ENCODE measurements at regions of chr3 and their contacts with region 1.

Region 1: DNA sequence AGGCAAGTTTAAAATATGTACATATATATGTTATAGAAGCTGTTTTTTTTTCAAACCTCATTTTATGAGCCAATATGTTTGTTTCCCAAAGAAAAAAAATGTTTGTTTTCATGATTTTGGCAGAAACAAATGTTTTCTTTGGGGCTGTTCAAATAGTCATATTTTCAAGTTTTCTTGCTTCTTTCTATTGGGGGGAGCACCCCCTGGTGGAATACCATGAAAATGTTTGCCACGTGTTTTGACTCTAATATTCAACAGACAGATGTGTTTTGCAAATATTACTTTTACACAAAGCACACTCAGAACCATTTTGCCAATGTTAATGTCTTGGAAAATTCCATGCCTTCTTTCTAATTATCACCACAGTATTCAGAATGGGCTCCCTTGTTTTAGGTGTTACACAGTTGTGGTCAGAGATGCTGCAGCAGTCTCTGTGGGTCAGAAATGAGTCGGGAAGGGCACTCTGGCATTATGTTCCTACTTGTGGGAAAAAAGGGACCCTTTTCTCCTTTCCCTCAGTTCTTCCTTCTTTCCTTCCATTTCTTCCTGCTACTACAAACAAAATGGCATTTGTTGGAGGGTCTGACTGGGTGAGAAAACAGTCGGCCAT is 817.0 kb downstream of the TUSC7 start:
- DNase-seq: peak; percentile 40
- H3K4me3 Mint-ChIP-seq: no peak overlapping the region
- H3K27ac Mint-ChIP-seq: no peak overlapping the region
- H3K4me1 Mint-ChIP-seq: peaks cover 26% of the 10 kb centered on the region
- H3K27me3 Mint-ChIP-seq: peaks cover 2% of the 10 kb centered on the region
- CTCF ChIP-seq: peak; percentile 58

Region 2: GRCh38 chr3:116770815-116771450 is 755.6 kb before region 1 on chr3:
- CTCF ChIA-PET with region 1: interaction called, 3 read pairs
- POLR2A ChIA-PET with region 1: no interaction called
- intact Hi-C with region 1: loop called (anchors 5 kb)
- DNase-seq: peak; percentile 77
- H3K4me3 Mint-ChIP-seq: no peak overlapping the region
- H3K27ac Mint-ChIP-seq: no peak overlapping the region
- H3K4me1 Mint-ChIP-seq: no peaks in the 10 kb centered on the region
- H3K27me3 Mint-ChIP-seq: peaks cover 90% of the 10 kb centered on the region
- CTCF ChIP-seq: peak; percentile 87

Region 3: DNA sequence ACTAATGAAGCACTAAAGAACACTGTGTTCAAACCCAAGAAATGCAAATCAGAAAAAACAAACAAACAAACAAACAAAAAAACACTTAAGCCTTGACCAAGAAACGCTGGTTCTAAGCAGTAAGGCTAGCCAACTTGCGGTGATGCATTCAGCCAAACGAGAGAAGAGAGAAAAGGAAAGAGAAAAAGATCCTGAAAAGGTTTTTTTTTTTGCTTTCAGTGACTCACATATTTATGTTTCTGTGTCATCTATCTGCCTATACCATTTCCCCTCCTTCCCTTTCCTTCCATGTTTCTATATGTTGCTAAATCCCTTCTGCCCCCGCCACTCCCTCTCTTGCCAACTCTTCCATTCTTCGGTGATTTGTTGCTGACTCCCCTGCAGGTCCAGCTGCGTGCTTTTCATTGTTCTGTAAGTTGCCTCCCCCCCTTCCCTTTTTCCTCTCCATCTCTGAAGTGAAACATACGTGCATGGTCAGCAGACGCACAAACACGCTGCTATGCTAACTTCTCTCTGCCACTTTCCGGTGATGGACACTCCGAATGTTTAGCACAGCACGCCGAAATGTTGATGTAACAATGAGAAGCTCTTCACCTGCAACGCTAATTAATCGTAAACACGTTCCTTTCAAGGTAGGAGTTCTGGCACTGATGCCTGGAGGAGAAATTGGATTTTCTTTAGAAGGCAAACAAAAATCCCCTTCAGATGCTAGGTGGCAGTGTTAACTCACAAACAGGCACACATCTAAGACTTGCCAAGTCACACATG is 662.6 kb before region 1 on chr3:
- CTCF ChIA-PET with region 1: interaction called, 5 read pairs
- POLR2A ChIA-PET with region 1: no interaction called
- intact Hi-C with region 1: loop called (anchors 1 kb)
- DNase-seq: peak; percentile 51
- H3K4me3 Mint-ChIP-seq: no peak overlapping the region
- H3K27ac Mint-ChIP-seq: no peak overlapping the region
- H3K4me1 Mint-ChIP-seq: no peaks in the 10 kb centered on the region
- H3K27me3 Mint-ChIP-seq: no peaks in the 10 kb centered on the region
- CTCF ChIP-seq: peak; percentile 46

Region 4: GRCh38 chr3:117019082-117019713 is 507.4 kb before region 1 on chr3:
- CTCF ChIA-PET with region 1: interaction called, 9 read pairs
- POLR2A ChIA-PET with region 1: no interaction called
- intact Hi-C with region 1: loop called (anchors 1 kb)
- DNase-seq: peak; percentile 60
- H3K4me3 Mint-ChIP-seq: no peak overlapping the region
- H3K27ac Mint-ChIP-seq: no peak overlapping the region
- H3K4me1 Mint-ChIP-seq: no peaks in the 10 kb centered on the region
- H3K27me3 Mint-ChIP-seq: peaks cover 83% of the 10 kb centered on the region
- CTCF ChIP-seq: peak; percentile 74

Region 5: GRCh38 chr3:117059067-117059955 is 467.3 kb before region 1 on chr3:
- CTCF ChIA-PET with region 1: interaction called, 28 read pairs
- POLR2A ChIA-PET with region 1: no interaction called
- intact Hi-C with region 1: loop called (anchors 1 kb)
- DNase-seq: peak; percentile 19
- H3K4me3 Mint-ChIP-seq: no peak overlapping the region
- H3K27ac Mint-ChIP-seq: no peak overlapping the region
- H3K4me1 Mint-ChIP-seq: no peaks in the 10 kb centered on the region
- H3K27me3 Mint-ChIP-seq: peaks cover 44% of the 10 kb centered on the region
- CTCF ChIP-seq: peak; percentile 44

Region 6: DNA sequence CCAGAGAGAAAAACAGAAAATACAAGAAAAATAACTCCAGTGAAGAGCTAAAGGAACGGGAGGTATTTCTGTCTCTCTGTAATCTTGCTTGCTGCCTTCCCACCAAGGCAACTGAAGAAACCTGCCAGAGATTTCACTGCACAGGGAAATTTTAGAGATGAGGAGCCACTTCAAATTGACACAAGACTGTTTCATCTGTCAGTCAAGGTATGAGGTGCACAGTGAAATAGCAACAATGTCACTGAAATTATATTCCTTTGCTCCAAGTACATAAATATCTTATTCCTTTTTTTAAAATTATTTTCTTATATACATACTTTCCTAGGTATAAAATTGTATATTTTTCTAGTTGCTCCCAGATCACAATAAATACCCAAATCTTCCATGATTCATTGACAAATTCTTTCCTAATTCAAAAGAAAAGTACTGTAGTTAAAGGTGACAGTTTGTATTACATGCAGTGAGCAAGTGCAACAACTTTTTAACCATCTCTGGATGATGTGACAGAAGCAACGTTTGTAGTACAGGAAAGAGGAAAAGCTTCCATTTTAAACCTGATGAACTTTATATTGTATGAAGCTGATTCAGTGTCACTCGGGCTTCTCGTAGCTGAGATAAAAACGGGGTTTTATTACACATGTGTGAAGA is 253.6 kb before region 1 on chr3:
- CTCF ChIA-PET with region 1: no interaction called
- POLR2A ChIA-PET with region 1: no interaction called
- intact Hi-C with region 1: loop called (anchors 5 kb)
- DNase-seq: no peak
- H3K4me3 Mint-ChIP-seq: no peak overlapping the region
- H3K27ac Mint-ChIP-seq: no peak overlapping the region
- H3K4me1 Mint-ChIP-seq: no peaks in the 10 kb centered on the region
- H3K27me3 Mint-ChIP-seq: peaks cover 91% of the 10 kb centered on the region
- CTCF ChIP-seq: no peak

Region 7: DNA sequence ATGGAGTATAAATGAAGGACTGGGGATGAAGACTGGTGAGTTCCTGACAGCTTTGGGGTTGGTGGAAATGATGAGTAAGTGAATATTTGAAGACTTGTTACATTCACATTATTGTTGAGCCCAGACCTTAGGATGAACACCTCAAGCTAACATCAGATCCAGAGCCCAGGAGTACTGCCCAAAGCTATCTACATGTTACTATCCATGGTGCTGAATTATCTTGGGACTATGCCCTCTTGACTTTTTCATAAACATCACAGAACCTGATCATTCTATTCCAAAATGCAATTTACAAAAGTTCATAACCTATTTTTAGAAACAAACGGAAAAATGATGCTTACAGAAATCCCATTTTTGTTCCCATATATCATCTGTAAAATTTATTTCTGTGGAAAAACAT is 203.7 kb before region 1 on chr3:
- CTCF ChIA-PET with region 1: no interaction called
- POLR2A ChIA-PET with region 1: no interaction called
- intact Hi-C with region 1: no loop called
- DNase-seq: peak; percentile 33
- H3K4me3 Mint-ChIP-seq: no peak overlapping the region
- H3K27ac Mint-ChIP-seq: no peak overlapping the region
- H3K4me1 Mint-ChIP-seq: no peaks in the 10 kb centered on the region
- H3K27me3 Mint-ChIP-seq: peaks cover 49% of the 10 kb centered on the region
- CTCF ChIP-seq: no peak

Region 8: GRCh38 chr3:117407317-117407716 is 119.3 kb before region 1 on chr3:
- CTCF ChIA-PET with region 1: interaction called, 15 read pairs
- POLR2A ChIA-PET with region 1: no interaction called
- intact Hi-C with region 1: loop called (anchors 2 kb)
- DNase-seq: peak; percentile 35
- H3K4me3 Mint-ChIP-seq: no peak overlapping the region
- H3K27ac Mint-ChIP-seq: no peak overlapping the region
- H3K4me1 Mint-ChIP-seq: peaks cover 6% of the 10 kb centered on the region
- H3K27me3 Mint-ChIP-seq: no peaks in the 10 kb centered on the region
- CTCF ChIP-seq: peak; percentile 42

Measured in MCF 10A (cell line).